Transverse colon (tissue), 4 donors: ENCODE measurements at regions of chr2 and their contacts with region 1.

Region 1: DNA sequence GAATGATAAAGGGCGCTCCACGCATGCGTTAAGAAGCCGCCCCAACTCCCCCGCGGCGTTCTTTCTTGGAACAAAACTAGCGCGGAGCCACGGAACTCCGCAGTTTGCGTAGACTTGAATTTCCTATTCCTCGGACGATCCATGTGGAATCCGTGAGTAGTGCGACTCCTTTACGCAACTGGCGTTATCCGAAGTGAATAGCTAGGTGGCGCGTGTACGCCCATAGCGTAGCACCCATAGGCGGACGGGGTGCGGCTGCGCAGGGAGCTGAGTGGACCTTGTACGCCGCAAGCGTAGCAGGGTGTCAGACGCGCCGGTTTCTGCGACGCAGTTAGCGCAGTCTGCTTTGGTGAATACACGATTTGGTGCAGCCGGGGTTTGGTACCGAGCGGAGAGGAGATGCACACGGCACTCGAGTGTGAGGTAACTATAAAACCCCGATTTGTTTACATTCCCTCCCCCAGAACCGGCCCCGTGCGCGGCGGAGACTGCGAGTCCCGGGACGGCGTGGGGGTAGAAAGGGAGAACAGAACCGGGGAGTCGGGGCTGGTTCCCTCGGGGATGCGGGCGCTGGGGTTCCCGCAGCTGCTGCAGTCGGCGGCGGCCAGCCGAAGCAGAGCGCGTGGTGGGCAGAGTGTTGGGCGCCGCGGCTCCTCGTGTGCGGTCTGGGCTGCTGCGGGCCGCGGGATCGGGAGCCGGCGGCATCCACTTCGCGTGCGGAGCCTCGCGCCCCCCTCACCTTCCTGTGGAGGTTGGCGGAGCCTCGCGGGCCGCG is at the start of gene SLC39A10:
- DNase-seq: peak; percentile 99
- H3K4me3 ChIP-seq: peak within 1 kb of the TSS; percentile 77 to 98 (median 86)
- H3K27ac ChIP-seq: peak within 1 kb of the TSS; percentile 98 to 100 (median 98)
- H3K4me1 ChIP-seq: peaks cover 0 to 46% (median 21%) of the 10 kb centered on the region in 4 donors
- H3K27me3 ChIP-seq: no peaks in the 10 kb centered on the region
- CTCF ChIP-seq: peak in 4 of 5 experiments; percentile 15 to 68 (median 40)
- EP300 ChIP-seq: no peak
- POLR2A ChIP-seq: peak; percentile 99
- total RNA-seq, gene SLC39A10: 4.9 to 34.4 (median 12.4) TPM

Region 2: GRCh38 chr2:195498176-195498575 is 158.9 kb before region 1 on chr2:
- in situ Hi-C with region 1: loop called in 1 of 4 experiments (anchors 10 kb)
- intact Hi-C with region 1: no loop called
- DNase-seq: peak; percentile 57
- H3K4me3 ChIP-seq: no peak overlapping the region
- H3K27ac ChIP-seq: no peak overlapping the region
- H3K4me1 ChIP-seq: peaks cover 0 to 15% (median 0%) of the 10 kb centered on the region in 4 donors
- H3K27me3 ChIP-seq: no peaks in the 10 kb centered on the region
- CTCF ChIP-seq: peak in 4 of 5 experiments; percentile 24 to 38 (median 33)
- EP300 ChIP-seq: no peak
- POLR2A ChIP-seq: no peak

Region 3: DNA sequence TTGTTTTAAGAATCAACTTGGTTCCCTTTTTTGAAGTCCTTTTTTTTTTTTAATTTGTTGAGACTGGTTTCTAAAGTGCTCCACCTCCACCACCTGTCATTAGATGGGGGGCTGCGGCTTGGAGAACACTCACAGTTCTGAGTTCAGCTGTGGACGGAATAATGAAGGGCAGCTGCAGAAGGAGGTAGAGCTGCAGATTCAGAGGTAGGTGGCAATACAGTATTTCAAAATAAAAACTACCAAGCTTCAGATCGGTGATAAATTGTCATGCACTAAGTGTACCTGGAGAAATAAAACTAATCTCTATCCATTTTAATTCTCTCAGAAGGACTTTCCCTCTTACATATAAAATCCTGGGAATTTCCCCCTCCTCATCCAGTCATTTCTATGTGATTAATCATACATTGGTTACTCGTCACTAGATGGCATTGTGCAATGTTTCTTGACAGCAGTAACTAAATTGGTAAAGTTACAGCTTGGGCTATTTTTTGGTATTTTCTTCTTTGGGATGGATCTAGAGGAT is 81.1 kb before region 1 on chr2:
- in situ Hi-C with region 1: loop called in 2 of 4 experiments (anchors 10 kb)
- intact Hi-C with region 1: no loop called
- DNase-seq: peak; percentile 33
- H3K4me3 ChIP-seq: no peak overlapping the region
- H3K27ac ChIP-seq: no peak overlapping the region
- H3K4me1 ChIP-seq: peaks cover 0 to 20% (median 3%) of the 10 kb centered on the region in 4 donors
- H3K27me3 ChIP-seq: no peaks in the 10 kb centered on the region
- CTCF ChIP-seq: no peak
- EP300 ChIP-seq: no peak
- POLR2A ChIP-seq: no peak

Region 4: DNA sequence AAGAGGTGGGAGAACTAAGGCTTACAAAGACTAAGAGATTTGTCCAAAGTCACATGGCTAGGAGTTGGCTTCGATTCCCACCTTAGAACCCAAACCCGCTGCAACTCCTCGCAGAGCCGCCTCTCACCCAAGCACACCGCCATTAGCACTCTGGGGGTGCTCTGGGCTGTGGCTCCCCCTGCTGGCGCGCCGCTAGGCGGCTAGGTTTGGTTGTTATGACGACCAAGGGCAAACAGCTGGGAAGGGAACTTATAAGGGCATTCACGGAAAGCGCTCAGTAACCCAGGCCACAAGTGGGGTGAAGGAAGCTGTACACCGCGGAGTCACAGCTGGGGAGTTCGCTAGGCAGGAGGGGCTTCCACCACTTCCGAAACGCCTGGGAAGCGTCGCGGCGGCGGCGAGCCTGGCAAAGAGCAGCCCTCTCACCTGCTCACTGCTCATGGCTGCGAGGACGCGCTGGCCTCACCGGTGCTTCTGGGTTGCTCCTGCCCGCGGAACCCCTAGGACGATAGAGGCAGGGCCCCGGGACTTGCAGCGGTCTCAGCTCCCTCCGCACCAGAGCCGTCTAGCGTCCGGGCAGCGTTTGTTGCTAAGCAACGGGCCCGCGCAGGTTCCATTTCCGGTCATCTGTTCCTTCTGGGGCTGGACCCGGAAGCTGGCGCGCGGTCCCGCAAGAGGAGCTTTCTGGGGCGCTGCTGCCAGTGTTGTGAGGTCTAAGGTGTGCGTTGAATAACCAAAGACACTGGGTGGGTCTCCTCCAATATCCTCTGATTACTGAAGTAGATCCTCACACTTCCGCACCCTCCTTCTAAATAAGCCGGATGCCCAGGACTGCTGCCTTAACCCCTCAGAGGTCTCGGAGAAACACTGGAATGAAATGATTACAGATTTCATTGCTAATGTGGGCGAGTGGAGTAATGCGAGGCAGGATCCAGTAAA is 411.5 kb after region 1 on chr2 and contains the start of gene DNAH7:
- in situ Hi-C with region 1: loop called (anchors 25 kb)
- intact Hi-C with region 1: no loop called
- DNase-seq: peak; percentile 92
- H3K4me3 ChIP-seq: peak within 1 kb of the TSS; percentile 59 to 92 (median 70)
- H3K27ac ChIP-seq: peak within 1 kb of the TSS; percentile 75 to 86 (median 80)
- H3K4me1 ChIP-seq: peaks cover 0 to 25% (median 6%) of the 10 kb centered on the region in 4 donors
- H3K27me3 ChIP-seq: no peaks in the 10 kb centered on the region
- CTCF ChIP-seq: peak; percentile 71 to 87 (median 80)
- EP300 ChIP-seq: no peak
- POLR2A ChIP-seq: peak; percentile 59
- total RNA-seq, gene DNAH7: 1.8 to 56.9 (median 8.1) TPM